ENCODE measurements at regions of chr11 and their contacts with region 1.

Region 1: GRCh38 chr11:4072668-4073285 is 21.8 kb upstream of the RRM1 start:
- DNase-seq: peak; percentile 49
- ATAC-seq: peak; percentile 72
- H3K4me3 Mint-ChIP-seq: no peak overlapping the region
- H3K27ac Mint-ChIP-seq: peak overlapping the region; percentile 74
- H3K4me1 Mint-ChIP-seq: peaks cover 35% of the 10 kb centered on the region
- H3K27me3 Mint-ChIP-seq: no peaks in the 10 kb centered on the region
- CTCF ChIP-seq: peak; percentile 78

Region 2: DNA sequence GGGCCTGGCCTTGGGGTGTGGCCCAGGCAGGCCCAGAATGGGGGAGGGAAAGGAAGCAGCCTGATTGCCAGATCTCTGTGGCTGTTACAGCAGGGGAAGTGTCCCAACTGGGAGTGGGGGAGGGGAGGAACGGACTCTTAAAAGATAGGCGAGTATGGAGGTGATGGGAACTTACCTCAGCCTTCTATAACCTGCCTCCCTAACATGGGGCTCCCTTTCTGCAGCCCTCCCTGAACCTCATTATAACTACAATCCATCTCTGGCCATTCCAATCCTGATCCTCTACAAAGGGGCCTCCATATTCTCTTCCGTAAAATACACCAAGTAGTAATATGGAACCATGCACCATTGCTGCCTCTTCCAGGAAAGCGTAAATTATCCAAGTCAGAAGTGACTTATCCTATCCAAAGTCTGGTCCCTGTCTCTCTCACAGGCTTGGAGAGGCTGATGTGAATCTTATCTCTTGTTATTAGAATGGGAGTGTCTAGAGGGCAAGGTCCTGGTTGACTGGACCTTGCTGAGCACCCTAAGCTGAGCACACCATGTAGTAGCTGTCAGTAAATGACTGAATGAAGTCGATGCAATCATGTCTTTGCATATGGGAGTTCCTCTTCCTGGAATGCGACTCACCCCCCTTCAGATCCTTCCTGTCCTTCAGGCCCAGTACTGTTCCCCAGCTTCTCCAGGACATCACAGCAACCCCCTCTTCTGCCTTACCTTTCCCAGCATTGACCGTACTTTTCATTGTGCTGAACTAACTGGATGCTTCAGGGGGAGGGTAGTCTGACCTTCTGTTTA is 237.9 kb before region 1 on chr11:
- CTCF ChIA-PET with region 1: interaction called, 775 read pairs
- POLR2A ChIA-PET with region 1: interaction called, 4 read pairs
- intact Hi-C with region 1: no loop called
- DNase-seq: no peak
- ATAC-seq: no peak
- H3K4me3 Mint-ChIP-seq: peak overlapping the region; percentile 87
- H3K27ac Mint-ChIP-seq: peak overlapping the region; percentile 91
- H3K4me1 Mint-ChIP-seq: peaks cover 74% of the 10 kb centered on the region
- H3K27me3 Mint-ChIP-seq: no peaks in the 10 kb centered on the region
- CTCF ChIP-seq: no peak

Region 3: GRCh38 chr11:3879216-3879966 is 193.4 kb before region 1 on chr11:
- CTCF ChIA-PET with region 1: interaction called, 14 read pairs
- POLR2A ChIA-PET with region 1: no interaction called
- intact Hi-C with region 1: no loop called
- DNase-seq: no peak
- ATAC-seq: peak; percentile 62
- H3K4me3 Mint-ChIP-seq: no peak overlapping the region
- H3K27ac Mint-ChIP-seq: peak overlapping the region; percentile 77
- H3K4me1 Mint-ChIP-seq: peaks cover 76% of the 10 kb centered on the region
- H3K27me3 Mint-ChIP-seq: no peaks in the 10 kb centered on the region
- CTCF ChIP-seq: no peak

Region 4: GRCh38 chr11:3947061-3947460 is 125.7 kb before region 1 on chr11:
- CTCF ChIA-PET with region 1: interaction called, 19 read pairs
- POLR2A ChIA-PET with region 1: no interaction called
- intact Hi-C with region 1: no loop called
- DNase-seq: peak; percentile 70
- ATAC-seq: peak; percentile 75
- H3K4me3 Mint-ChIP-seq: peak overlapping the region; percentile 37
- H3K27ac Mint-ChIP-seq: peak overlapping the region; percentile 93
- H3K4me1 Mint-ChIP-seq: peaks cover 93% of the 10 kb centered on the region
- H3K27me3 Mint-ChIP-seq: no peaks in the 10 kb centered on the region
- CTCF ChIP-seq: no peak

Region 5: GRCh38 chr11:3995949-3996554 is 76.7 kb before region 1 on chr11:
- CTCF ChIA-PET with region 1: interaction called, 20 read pairs
- POLR2A ChIA-PET with region 1: no interaction called
- intact Hi-C with region 1: no loop called
- DNase-seq: no peak
- ATAC-seq: no peak
- H3K4me3 Mint-ChIP-seq: no peak overlapping the region
- H3K27ac Mint-ChIP-seq: no peak overlapping the region
- H3K4me1 Mint-ChIP-seq: peaks cover 48% of the 10 kb centered on the region
- H3K27me3 Mint-ChIP-seq: no peaks in the 10 kb centered on the region
- CTCF ChIP-seq: no peak

Region 6: DNA sequence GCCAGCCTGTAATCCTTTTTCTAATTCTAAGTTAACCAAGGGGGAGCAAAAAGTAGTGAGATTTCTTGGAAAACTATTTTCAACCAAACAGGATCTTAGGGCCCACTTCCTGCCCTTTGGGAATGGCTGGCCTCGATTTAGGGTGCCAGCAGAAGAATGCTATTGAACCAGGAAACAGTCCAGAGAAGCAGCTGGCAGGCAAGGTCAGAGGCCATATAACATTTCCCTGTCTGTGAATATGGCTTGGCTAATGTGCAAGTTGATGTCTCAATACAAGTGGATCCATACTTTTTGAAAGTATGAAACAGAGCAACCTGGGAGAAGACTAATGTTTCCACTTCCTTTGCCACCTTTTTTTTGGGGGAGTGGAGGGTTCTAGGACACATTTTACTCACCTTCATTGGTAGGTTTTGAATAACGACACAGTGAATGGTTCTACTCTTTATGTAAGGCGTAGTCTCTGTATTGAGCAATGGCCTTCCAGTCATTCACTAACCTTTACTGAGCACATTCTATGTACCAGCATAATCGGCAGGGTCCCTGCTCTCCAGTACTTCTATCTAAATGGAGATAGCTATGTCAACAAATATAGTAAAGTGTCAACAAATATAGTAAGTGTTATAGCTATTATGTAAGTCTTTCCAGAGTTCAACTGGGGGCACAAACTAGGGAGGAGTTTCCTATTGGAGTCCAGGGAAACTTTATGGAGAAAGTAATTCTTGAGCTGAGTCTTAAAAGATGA is 12.4 kb before region 1 on chr11:
- CTCF ChIA-PET with region 1: interaction called, 64 read pairs
- POLR2A ChIA-PET with region 1: interaction called, 4 read pairs
- intact Hi-C with region 1: no loop called
- DNase-seq: no peak
- ATAC-seq: no peak
- H3K4me3 Mint-ChIP-seq: no peak overlapping the region
- H3K27ac Mint-ChIP-seq: no peak overlapping the region
- H3K4me1 Mint-ChIP-seq: peaks cover 44% of the 10 kb centered on the region
- H3K27me3 Mint-ChIP-seq: no peaks in the 10 kb centered on the region
- CTCF ChIP-seq: no peak

Region 7: DNA sequence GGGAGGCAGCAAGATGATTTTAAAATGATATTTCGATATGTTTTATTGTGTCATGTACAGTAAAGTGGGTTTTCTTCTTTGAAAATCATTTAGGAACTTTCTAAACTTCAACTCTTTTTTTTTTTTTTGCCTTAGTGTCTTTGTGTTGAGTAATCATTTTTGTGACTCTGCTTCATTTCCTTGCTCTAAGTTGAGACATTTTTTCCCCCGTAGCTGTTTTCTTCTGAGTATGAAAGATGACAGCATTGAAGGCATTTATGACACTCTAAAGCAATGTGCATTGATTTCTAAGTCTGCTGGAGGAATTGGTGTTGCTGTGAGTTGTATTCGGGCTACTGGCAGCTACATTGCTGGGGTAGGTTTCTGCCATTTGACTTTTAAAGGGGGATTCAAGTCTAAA is 45.3 kb after region 1 on chr11:
- CTCF ChIA-PET with region 1: no interaction called
- POLR2A ChIA-PET with region 1: no interaction called
- intact Hi-C with region 1: no loop called
- DNase-seq: no peak
- ATAC-seq: no peak
- H3K4me3 Mint-ChIP-seq: no peak overlapping the region
- H3K27ac Mint-ChIP-seq: no peak overlapping the region
- H3K4me1 Mint-ChIP-seq: peaks cover 10% of the 10 kb centered on the region
- H3K27me3 Mint-ChIP-seq: no peaks in the 10 kb centered on the region
- CTCF ChIP-seq: no peak